Lower leg skin (tissue), 4 donors: ENCODE measurements at regions of chr16 and their contacts with region 1.

Region 1: DNA sequence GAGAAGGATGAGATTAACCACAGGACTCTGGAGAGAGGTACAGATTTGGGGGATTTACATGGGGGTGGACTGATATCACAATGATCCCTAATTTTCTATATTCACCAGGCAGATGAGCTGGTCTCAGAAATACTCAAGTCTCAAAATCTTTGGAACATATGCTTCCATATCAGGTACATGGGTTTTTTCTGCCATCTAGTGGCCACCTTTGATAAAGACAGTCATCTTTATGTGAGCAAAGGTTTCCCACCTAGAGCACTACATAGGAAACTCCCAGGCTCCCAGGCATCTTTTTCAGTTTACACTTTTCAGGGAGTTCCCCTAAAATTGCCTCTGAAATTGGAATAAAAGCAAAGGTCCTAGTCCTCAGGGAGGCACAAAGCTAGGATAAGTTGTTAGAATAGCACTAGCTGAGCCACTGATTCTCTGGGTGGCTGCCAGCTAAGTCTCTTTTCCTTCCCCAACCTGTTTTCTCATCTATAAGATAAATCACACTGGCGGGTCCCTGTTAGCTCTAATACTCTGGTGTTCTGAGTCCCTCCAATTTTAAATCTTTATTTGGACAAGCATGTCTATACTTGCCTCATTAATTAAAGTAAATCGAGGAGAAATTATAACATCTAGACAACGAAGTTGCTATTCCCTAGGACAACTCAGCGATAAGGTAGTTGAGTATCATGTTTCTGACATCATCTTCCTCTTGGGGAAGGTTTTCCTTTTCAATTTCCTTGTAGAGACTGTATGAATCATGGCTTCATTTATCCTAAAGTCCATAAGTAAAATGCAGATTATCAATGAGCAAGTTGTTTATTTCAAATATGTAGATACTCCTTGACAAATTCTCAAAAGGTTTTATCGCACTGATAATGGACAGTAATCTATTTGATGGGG is 19.0 kb upstream of the MON1B start:
- DNase-seq: no peak
- H3K4me3 ChIP-seq: no peak overlapping the region
- CTCF ChIP-seq: no peak
- POLR2A ChIP-seq: no peak

Region 2: DNA sequence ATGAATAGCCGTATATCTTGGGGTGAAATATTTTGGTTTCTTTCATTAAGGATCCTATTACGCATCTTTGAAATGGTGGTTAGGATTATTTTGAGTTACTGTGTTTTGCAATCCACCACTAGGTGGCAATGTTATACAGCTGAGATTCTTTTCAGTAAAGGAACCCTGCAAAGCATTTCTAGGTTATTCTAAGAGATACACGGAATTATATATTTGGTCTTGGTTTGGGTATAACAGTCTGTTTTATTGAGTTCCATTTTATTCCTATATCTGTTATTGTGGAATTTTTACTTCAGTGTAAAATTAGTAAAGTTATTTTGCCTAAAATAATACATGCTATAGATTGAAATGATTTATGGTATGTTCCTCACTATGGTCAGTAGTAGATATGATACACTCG is 1382.8 kb before region 1 on chr16:
- intact Hi-C with region 1: loop called (anchors 5 kb)
- DNase-seq: no peak
- H3K4me3 ChIP-seq: no peak overlapping the region
- CTCF ChIP-seq: peak in 1 of 3 donors; percentile 16
- POLR2A ChIP-seq: no peak

Region 3: DNA sequence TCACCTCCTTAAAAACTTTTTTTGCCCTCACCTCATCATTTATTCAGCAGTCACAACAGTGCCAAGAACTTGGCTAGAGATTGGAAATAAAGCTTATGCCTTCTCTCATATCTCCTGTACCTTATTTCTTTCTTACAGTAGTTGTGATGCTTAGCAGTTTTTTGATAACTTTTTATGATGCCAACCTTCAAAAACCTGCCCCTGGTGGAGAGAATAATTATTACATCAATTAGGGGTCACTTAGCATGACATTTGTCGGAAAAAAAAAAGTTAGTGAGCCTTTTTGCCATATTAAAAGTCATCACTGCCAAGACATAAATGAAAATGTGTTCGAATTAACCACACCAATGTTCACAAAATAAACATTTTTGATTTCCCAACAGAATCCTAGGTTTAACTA is 1224.1 kb after region 1 on chr16:
- intact Hi-C with region 1: no loop called
- DNase-seq: no peak
- H3K4me3 ChIP-seq: no peak overlapping the region
- CTCF ChIP-seq: no peak
- POLR2A ChIP-seq: no peak